CD8-positive, alpha-beta memory T cell (primary cell): ENCODE measurements at regions of chr15 and their contacts with region 1.

Region 1: GRCh38 chr15:45402162-45402954 is 24.0 kb upstream of the GATM start:
- DNase-seq: peak; percentile 89 to 97 (median 93)
- H3K4me3 ChIP-seq: peak overlapping the region; percentile 83
- H3K4me3 Mint-ChIP-seq: peak overlapping the region; percentile 92 to 97 (median 96)
- H3K27ac ChIP-seq: peak overlapping the region; percentile 80
- H3K27ac Mint-ChIP-seq: peak overlapping the region; percentile 93 to 99 (median 97)
- H3K4me1 ChIP-seq: peaks cover 21% of the 10 kb centered on the region
- H3K4me1 Mint-ChIP-seq: peaks cover 32 to 45% (median 42%) of the 10 kb centered on the region in 3 donors
- H3K27me3 ChIP-seq: no peaks in the 10 kb centered on the region
- H3K27me3 Mint-ChIP-seq: peaks cover 0 to 3% of the 10 kb centered on the region in 2 donors

Region 2: GRCh38 chr15:45198337-45199135 is 203.8 kb before region 1 on chr15:
- CTCF ChIA-PET with region 1: interaction called, 6 read pairs
- POLR2A ChIA-PET with region 1: interaction called, 26 read pairs
- DNase-seq: peak; percentile 83 to 98 (median 97)
- H3K4me3 ChIP-seq: peak overlapping the region; percentile 94
- H3K4me3 Mint-ChIP-seq: no peak overlapping the region
- H3K27ac ChIP-seq: peak overlapping the region; percentile 94
- H3K27ac Mint-ChIP-seq: peak overlapping the region in 1 of 8 donors; percentile 60
- H3K4me1 ChIP-seq: peaks cover 16% of the 10 kb centered on the region
- H3K4me1 Mint-ChIP-seq: peaks cover 4 to 19% (median 13%) of the 10 kb centered on the region in 3 donors
- H3K27me3 ChIP-seq: no peaks in the 10 kb centered on the region
- H3K27me3 Mint-ChIP-seq: peaks cover 0 to 13% of the 10 kb centered on the region in 2 donors

Region 3: DNA sequence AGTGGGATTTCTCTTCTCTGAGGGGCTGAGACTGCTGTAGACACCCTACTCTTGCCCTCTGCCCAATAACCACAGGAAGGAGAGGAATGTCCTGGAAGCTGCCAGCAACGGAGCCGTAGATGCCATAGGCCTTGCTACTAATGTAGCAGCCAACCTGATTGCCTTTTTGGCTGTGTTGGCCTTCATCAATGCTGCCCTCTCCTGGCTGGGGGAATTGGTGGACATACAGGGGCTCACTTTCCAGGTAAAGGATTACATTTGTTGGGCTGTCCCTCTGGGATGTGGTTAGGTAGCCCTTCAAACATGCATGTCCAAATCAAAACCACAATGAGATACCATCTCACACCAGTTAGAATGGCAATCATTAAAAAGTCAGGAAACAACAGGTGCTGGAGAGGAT is 134.2 kb before region 1 on chr15:
- CTCF ChIA-PET with region 1: no interaction called
- POLR2A ChIA-PET with region 1: no interaction called
- DNase-seq: no peak
- H3K4me3 ChIP-seq: no peak overlapping the region
- H3K4me3 Mint-ChIP-seq: no peak overlapping the region
- H3K27ac ChIP-seq: no peak overlapping the region
- H3K27ac Mint-ChIP-seq: no peak overlapping the region
- H3K4me1 ChIP-seq: no peaks in the 10 kb centered on the region
- H3K4me1 Mint-ChIP-seq: no peaks in the 10 kb centered on the region
- H3K27me3 ChIP-seq: no peaks in the 10 kb centered on the region
- H3K27me3 Mint-ChIP-seq: peaks cover 0 to 6% of the 10 kb centered on the region in 2 donors

Region 4: DNA sequence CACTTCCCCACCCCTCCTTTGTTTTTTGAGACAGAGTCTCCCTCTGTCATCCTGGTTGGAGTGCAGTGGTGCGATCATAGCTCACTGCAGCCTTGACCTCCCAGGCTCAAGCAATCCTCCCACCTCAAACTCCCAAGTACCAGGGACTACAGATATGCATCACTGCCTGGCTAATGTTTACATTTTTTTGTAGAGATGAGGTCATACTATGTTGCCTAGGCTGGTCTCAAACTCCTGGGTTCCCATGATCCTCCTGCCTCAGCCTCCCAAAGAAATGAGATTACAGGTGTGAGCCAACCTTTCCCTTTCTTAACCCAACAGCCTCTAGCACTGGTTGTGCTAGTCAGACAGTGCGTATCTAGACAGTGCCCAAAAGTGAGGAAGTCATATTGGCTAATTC is 17.7 kb before region 1 on chr15:
- CTCF ChIA-PET with region 1: interaction called, 13 read pairs
- POLR2A ChIA-PET with region 1: interaction called, 5 read pairs
- DNase-seq: no peak
- H3K4me3 ChIP-seq: no peak overlapping the region
- H3K4me3 Mint-ChIP-seq: no peak overlapping the region
- H3K27ac ChIP-seq: no peak overlapping the region
- H3K27ac Mint-ChIP-seq: no peak overlapping the region
- H3K4me1 ChIP-seq: no peaks in the 10 kb centered on the region
- H3K4me1 Mint-ChIP-seq: no peaks in the 10 kb centered on the region
- H3K27me3 ChIP-seq: peaks cover 4% of the 10 kb centered on the region
- H3K27me3 Mint-ChIP-seq: peaks cover 28 to 53% of the 10 kb centered on the region in 2 donors

Region 5: DNA sequence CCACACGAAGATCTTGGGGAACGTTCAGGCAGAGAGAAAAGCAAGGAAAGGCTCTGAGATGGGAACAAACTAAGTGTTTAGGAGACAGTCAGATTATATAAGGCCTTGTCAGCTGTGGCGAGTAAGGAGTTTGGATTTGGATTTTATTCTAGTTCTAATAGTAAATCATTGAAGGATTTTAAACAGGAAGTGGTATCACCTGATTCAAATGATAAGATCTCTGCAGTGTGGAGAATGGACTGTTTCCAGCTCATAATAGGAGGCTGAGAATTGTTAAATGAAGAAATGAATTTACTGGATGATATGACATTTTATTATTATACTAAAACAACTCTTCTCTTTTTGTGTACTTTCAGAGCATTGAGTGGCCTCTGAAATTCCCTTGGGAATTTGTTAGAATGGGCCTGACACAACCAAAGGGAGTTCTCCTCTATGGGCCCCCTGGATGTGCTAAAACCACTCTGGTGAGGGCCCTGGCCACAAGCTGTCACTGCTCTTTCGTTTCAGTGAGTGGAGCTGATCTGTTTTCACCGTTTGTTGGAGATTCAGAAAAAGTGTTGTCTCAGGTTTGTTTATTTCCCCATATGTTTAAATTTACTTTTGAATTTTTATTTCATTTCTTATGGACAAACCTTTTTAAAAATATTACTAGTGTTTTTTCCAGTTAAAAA is 12.0 kb after region 1 on chr15:
- CTCF ChIA-PET with region 1: interaction called, 6 read pairs
- POLR2A ChIA-PET with region 1: interaction called, 10 read pairs
- DNase-seq: no peak
- H3K4me3 ChIP-seq: no peak overlapping the region
- H3K4me3 Mint-ChIP-seq: no peak overlapping the region
- H3K27ac ChIP-seq: no peak overlapping the region
- H3K27ac Mint-ChIP-seq: peak overlapping the region in 7 of 8 donors; percentile 11 to 91 (median 66)
- H3K4me1 ChIP-seq: peaks cover 12% of the 10 kb centered on the region
- H3K4me1 Mint-ChIP-seq: peaks cover 22 to 30% (median 26%) of the 10 kb centered on the region in 3 donors
- H3K27me3 ChIP-seq: no peaks in the 10 kb centered on the region
- H3K27me3 Mint-ChIP-seq: no peaks in the 10 kb centered on the region

Region 6: GRCh38 chr15:45587095-45587860 is 184.9 kb after region 1 on chr15 and contains the start of gene BLOC1S6:
- CTCF ChIA-PET with region 1: interaction called, 10 read pairs
- POLR2A ChIA-PET with region 1: interaction called, 28 read pairs
- DNase-seq: peak; percentile 82 to 92 (median 88)
- H3K4me3 ChIP-seq: peak within 1 kb of the TSS; percentile 95
- H3K4me3 Mint-ChIP-seq: peak within 1 kb of the TSS; percentile 97 to 100 (median 99)
- H3K27ac ChIP-seq: peak within 1 kb of the TSS; percentile 99
- H3K27ac Mint-ChIP-seq: peak within 1 kb of the TSS; percentile 97 to 100 (median 100)
- H3K4me1 ChIP-seq: peaks cover 34% of the 10 kb centered on the region
- H3K4me1 Mint-ChIP-seq: peaks cover 36 to 56% (median 53%) of the 10 kb centered on the region in 3 donors
- H3K27me3 ChIP-seq: no peaks in the 10 kb centered on the region
- H3K27me3 Mint-ChIP-seq: no peaks in the 10 kb centered on the region
- total RNA-seq, gene BLOC1S6: 50.9 to 56.7 TPM

Region 7: DNA sequence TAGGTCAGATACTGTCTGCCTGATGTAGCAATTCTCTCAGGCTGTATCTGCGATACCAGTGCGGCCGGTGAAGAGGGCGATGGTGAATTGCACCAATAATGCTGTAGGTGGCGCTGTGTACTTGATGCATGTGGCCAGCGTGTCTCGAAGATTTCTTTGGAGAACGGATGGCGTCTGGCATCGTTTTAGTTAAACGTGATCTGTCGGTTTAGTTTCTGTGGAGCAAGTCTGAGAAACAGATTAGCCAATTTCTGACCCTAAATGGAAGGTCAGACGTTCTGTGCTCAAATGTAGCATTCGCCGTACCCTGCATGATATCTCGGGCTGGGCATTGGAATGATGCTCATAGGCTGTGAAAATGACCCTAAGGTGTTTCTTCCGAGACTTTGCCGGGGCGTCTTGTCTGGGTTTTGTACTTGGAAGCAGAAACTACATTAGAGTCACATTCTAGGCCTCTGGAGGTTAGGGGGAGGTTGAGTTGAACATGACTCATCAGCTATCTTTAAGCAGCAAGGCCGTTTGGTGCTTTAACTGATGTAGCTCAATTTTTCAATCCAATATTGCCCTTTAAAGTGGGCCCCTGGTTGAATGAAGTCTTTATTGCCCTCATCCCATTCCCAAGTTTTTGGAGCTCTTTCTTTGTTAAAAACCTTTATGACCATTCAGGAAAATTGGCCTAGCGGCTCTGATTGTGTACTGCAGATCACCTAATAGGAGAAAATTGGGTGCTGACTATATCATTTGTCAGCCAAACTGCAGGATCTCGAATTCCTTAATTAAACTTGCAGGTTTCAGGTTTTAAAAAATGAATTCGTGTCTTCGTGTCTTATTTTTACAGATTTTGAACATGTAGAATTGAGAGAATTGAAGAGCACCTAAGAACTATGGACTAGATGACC is 312.5 kb after region 1 on chr15:
- CTCF ChIA-PET with region 1: no interaction called
- POLR2A ChIA-PET with region 1: no interaction called
- DNase-seq: peak in 3 of 5 donors; percentile 7 to 13 (median 11)
- H3K4me3 ChIP-seq: no peak overlapping the region
- H3K4me3 Mint-ChIP-seq: no peak overlapping the region
- H3K27ac ChIP-seq: no peak overlapping the region
- H3K27ac Mint-ChIP-seq: no peak overlapping the region
- H3K4me1 ChIP-seq: no peaks in the 10 kb centered on the region
- H3K4me1 Mint-ChIP-seq: peaks cover 0 to 5% (median 1%) of the 10 kb centered on the region in 3 donors
- H3K27me3 ChIP-seq: no peaks in the 10 kb centered on the region
- H3K27me3 Mint-ChIP-seq: peaks cover 14 to 37% of the 10 kb centered on the region in 2 donors

Region 8: DNA sequence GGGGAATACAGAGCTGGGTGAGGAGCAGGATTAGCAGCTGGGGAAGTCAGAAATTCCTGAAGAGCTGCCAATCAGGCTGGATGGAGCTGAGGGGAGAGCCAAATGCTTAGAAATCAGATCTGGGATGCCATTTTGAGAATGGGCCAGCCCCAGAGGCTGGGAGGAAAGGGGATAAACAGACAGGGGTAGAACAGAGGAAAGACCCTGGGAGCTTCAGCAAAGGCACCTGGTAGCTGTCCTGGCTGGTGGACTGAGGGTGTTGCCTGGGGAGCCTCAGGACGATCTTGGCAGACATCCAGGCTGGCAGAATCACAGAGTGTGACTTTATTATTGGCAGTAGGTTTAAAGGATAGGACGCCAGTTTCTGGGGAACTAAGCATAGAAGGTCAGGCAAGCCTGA is 330.3 kb after region 1 on chr15:
- CTCF ChIA-PET with region 1: no interaction called
- POLR2A ChIA-PET with region 1: no interaction called
- DNase-seq: no peak
- H3K4me3 ChIP-seq: no peak overlapping the region
- H3K4me3 Mint-ChIP-seq: no peak overlapping the region
- H3K27ac ChIP-seq: no peak overlapping the region
- H3K27ac Mint-ChIP-seq: no peak overlapping the region
- H3K4me1 ChIP-seq: no peaks in the 10 kb centered on the region
- H3K4me1 Mint-ChIP-seq: no peaks in the 10 kb centered on the region
- H3K27me3 ChIP-seq: no peaks in the 10 kb centered on the region
- H3K27me3 Mint-ChIP-seq: peaks cover 11 to 74% of the 10 kb centered on the region in 2 donors